Cardiac septum (tissue), 1 donor: ENCODE measurements at regions of chr7 and their contacts with region 1.

Region 1: DNA sequence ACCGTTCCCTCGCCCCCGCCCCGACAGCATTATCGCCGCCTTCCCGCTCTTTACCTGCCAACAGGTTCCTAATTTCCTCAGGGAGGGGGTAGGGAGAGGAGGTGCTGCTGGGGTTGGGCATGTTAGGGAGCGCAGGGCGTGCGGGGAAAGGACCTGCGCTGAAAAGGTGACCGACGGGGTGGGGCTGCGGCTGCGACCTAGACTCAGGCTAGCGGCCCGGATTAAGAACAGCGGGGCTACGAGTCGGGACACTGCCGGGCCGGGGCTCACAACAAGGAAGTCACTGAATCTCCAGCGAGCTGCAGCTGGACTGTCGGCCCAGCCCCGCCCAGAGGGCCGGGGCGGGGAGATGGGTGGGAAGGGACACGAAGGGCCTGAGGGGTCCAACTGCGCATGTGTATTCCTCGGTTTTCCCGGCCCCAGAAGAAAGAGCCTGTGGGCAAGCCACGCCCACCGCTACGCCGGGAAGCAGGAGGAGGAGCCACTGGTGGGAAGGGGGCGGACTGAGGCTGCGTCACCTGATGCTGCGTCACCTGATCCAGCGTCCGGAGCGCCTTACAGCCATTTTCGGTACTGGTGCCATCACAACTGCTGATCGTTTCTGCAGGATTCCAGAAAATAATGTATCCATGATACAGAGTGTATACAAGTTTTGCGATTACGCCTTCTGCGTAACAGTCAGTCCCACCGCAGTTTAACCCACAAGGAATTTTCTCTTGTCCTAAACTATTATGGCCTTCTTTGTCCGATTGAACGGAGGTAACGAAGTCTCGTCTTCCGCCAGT is at the start of gene SKAP2:
- DNase-seq: peak; percentile 98
- total RNA-seq, gene SKAP2: 4.3 TPM

Region 2: DNA sequence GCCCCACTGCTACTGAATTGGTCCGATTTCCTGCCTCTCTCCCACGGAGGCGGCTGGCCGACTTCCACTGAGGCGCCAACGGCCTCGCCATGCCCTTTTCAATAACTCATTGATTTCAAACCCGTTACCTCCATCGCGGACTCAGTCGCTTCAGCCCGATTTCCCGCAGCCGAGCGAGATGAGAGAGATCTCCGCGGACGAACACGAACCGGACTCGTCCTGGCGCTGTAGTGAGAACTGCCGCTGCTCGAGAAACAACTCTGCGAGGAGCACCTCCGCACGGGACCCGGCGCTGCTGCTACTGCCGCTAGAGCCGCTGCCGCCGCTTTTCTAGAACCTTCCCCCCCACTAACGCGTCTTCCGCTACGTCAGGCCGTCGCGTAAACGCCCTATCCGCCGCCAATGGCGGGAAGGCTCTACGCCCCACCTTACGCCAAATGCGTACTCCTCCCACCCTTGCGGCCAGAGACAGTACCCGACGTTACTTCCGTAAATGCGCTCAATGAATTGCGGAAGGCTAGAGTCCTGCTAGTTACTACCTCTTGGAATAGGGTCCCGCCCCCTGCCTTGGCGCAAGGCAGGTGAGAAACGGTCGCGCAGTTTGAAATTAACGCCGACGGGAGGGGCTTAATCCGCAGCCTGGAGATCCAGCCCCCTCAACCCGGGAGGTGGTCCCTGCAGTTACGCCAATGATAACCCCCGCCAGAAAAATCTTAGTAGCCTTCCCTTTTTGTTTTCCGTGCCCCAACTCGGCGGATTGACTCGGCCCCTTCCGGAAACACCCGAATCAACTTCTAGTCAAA is 663.9 kb before region 1 on chr7 and contains the start of gene HNRNPA2B1:
- intact Hi-C with region 1: loop called (anchors 5 kb)
- DNase-seq: peak; percentile 98
- total RNA-seq, gene HNRNPA2B1: 353 TPM

Region 3: GRCh38 chr7:26291699-26292538 is 572.6 kb before region 1 on chr7 and contains the start of gene SNX10:
- intact Hi-C with region 1: no loop called
- DNase-seq: peak; percentile 88
- total RNA-seq, gene SNX10: 1.3 TPM

Region 4: DNA sequence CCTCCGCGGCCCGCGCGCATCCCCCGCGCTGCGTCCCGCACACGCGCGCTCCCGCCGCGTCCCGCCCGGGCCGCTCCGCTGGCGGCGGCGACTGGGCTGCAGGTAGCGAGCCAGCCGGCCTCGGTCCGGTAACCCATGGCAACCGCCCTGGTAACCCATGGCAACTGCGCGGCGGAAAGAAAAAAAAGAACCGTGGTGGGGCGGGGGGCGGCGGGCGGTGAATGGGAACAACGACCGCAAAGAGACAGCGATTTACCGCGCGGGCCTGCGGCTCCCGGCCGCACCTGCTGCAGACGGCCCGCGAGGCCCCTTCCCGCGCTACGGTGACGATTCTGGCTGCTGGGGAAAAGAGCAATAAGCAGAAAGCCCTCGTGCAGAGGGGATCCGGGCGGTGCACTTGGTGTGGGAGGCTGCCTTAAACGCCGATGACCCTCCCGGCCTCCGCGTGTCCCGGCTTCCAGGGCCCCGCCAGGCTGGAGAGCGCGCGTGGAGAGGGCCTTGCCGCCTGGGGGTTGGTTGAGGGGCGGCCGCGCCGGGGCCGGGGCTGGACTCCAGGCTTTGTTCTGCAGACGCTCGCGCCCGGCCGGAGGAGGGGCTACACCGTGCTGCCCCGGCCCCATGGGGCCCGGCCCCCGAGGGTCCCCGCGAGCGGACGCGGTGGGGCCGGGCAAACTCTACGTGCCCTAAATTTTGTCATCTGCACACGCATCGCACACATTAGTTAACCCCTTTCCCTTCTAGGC is 488.2 kb before region 1 on chr7:
- intact Hi-C with region 1: loop called (anchors 10 kb)
- DNase-seq: no peak

Region 5: GRCh38 chr7:26729150-26729775 is 135.2 kb before region 1 on chr7:
- intact Hi-C with region 1: no loop called
- DNase-seq: no peak

Region 6: DNA sequence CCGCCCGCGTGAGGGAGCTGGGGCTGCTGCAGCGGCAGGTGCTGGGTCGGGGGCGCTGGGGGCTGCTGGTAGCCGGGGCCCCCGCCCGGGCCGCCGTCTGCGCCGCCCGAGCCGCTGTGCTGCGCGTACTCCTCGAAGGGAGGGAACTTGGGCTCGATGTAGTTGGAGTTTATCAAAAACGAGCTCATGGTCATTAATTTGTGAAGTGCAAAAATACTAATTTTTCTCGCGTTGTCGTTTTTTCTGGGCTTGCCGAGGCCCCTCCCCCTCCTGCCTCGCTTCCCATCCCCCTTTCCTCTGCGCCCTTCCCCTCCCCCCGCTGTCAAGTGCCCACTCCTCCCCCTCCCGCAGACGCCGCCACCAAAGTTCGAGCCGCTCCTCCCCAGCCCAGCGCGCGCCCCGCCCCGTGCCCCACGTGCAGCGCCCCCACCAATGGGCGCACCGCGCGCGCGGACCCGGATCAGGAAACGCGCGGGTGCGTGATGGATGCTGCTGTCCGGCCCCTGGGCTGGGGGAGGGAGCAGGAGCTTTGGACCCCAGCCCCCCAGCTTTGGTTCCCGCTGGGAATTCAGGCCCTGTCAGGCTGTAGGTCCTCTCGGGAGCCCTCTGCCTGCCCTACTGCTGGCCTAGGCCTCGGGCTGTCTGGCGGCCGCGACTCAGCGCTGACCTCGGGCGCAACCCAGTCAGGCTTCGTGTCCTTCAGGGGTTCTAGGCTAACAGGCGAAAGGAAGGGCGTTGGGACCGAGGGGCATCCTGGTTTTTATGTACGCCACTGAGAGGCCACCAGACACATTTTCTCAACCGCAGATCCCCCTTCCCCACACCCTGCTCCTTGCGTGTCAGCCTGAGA is 266.3 kb after region 1 on chr7 and contains the start of gene HOXA4:
- intact Hi-C with region 1: loop called (anchors 5 kb)
- DNase-seq: peak; percentile 90
- total RNA-seq, gene HOXA4: 1.1 TPM